K562 (cell line): ENCODE measurements at regions of chr1 and their contacts with region 1.

Region 1: DNA sequence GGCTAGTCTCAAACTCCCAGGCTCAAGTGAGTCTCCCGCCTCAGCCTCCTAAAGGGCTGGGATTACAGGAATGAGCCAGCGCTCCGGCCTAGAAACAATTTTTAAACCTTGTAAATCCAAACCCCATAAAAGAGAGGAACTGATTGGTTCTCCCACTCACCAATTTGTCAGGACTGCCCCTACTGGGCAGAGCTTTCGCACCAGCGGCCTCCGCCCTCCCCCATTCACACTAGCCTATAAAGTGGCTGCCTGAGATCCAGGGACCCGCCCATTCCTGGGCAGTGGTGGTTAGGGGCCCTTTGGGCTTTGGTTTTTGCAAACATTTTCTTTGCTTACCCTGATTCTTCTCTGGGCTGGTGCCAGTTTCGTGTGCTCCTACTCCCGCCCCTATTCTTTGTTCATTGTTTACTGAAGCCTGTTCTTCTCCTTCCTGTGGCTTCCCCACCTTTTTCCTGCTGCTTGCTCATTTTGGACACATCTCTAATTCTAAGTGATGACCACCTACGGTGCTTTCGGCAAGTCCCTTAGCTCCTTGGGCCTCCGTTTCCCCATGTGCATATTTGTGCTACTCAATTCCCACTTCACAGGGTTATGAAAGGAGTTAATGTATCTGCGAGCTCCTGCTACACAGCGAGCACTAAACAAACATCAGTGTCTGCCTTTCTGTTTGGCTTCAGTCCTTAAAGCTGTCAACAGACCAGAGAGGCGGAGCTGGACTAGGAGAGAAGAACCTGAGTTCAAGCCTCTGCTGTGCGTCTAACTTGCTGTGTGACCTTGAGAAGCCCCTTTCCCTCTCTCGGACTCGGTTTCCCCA is 39.8 kb upstream of the CLIC4 start:
- DNase-seq: peak; percentile 92 to 99 (median 94)
- ATAC-seq: peak; percentile 100
- H3K4me3 ChIP-seq: peak overlapping the region; percentile 4; the same call in 1 of the 2 replicates
- H3K27ac ChIP-seq: peak overlapping the region; percentile 43; the same call in 2 of the 3 replicates
- H3K4me1 ChIP-seq: peaks cover 15 to 26% of the 10 kb centered on the region in 2 experiments
- H3K27me3 ChIP-seq: no peaks in the 10 kb centered on the region
- CTCF ChIP-seq: no peak
- EP300 ChIP-seq: no peak
- POLR2A ChIP-seq: peak; percentile 66; the same call in 1 of the 2 replicates
- RAD21 ChIP-seq: no peak

Region 2: DNA sequence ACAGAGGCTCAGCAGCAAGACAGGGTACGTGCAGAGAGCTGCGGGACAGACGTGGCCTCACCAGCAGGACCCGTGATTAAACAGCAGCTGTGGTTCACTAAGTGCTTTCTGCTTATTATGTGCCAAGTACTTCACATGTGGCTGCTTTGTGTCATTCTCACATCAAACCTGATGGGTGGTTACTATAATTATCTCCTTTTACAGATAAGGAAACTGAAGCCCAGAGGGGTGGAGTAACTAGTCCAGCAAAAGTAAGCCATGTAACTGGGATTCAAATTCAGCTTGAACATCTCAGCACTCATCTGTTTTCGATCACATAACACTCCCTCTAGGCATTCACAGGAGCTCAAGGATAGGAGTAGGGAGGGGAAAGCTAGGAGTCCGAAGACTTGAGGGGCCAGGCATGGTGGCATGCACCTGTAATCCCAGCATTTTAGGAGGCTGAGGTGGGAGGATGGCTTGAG is 11.1 kb before region 1 on chr1:
- CTCF ChIA-PET with region 1: no interaction called
- POLR2A ChIA-PET with region 1: interaction called, 14 read pairs
- in situ Hi-C with region 1: no loop called
- intact Hi-C with region 1: no loop called
- DNase-seq: peak in 2 of 4 experiments; percentile 35 to 55
- ATAC-seq: peak; percentile 56
- H3K4me3 ChIP-seq: no peak overlapping the region
- H3K27ac ChIP-seq: peak overlapping the region; percentile 25; the same call in 1 of the 3 replicates
- H3K4me1 ChIP-seq: peaks cover 13 to 26% of the 10 kb centered on the region in 2 experiments
- H3K27me3 ChIP-seq: no peaks in the 10 kb centered on the region
- CTCF ChIP-seq: no peak
- EP300 ChIP-seq: no peak
- POLR2A ChIP-seq: no peak
- RAD21 ChIP-seq: 0 out of 4 replicates have a peak, but pooled peaks of 1 of the 2 experiments have one; percentile 20

Region 3: DNA sequence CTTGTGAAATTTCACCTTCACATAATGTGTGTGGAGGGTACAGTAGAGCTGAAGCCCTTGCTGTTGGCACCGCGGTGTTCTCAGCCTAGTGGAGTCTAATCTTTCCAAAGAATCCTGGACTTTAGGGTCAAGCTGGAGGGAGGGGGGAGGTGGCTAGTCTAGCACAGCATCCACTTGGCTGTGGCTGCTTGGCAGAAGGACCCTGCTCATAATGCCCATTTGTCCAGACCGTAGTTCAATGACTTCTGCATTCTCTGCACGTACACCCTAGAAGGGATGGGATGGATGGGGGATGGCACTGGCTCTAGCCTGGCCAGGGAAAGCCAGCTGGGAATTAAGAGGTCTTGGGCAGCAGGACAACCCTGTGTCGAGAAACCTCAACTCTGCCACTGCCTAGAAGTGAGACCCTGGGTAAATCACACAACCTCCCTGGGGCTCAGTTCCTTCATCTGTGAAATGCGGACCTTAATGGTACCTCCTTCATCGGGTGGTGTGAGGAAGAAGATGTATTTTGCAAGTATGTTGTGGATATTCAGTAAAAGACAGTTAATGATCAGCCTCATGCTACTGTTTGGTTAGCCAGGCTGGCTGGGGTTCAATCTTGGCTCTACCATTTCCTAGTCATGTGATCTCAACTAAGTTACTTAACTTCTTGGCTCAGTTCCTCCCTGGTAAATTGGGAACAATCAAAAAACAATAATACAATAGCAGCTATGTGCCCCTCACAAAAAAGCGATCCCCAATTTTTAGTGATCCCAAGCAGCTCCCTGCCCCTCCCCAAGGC is 12.6 kb after region 1 on chr1:
- CTCF ChIA-PET with region 1: no interaction called
- POLR2A ChIA-PET with region 1: interaction called, 11 read pairs
- in situ Hi-C with region 1: no loop called
- intact Hi-C with region 1: no loop called
- DNase-seq: peak in 2 of 4 experiments; percentile 3 to 4
- ATAC-seq: no peak
- H3K4me3 ChIP-seq: no peak overlapping the region
- H3K27ac ChIP-seq: no peak overlapping the region
- H3K4me1 ChIP-seq: peaks cover 0 to 6% of the 10 kb centered on the region in 2 experiments; a peak in 1 of 5 replicates
- H3K27me3 ChIP-seq: no peaks in the 10 kb centered on the region
- CTCF ChIP-seq: no peak
- EP300 ChIP-seq: no peak
- POLR2A ChIP-seq: no peak
- RAD21 ChIP-seq: no peak

Region 4: GRCh38 chr1:24805534-24806301 is 100.3 kb after region 1 on chr1:
- CTCF ChIA-PET with region 1: no interaction called
- POLR2A ChIA-PET with region 1: no interaction called
- in situ Hi-C with region 1: no loop called
- intact Hi-C with region 1: no loop called
- DNase-seq: no peak
- ATAC-seq: no peak
- H3K4me3 ChIP-seq: no peak overlapping the region
- H3K27ac ChIP-seq: no peak overlapping the region
- H3K4me1 ChIP-seq: peaks cover 0 to 11% of the 10 kb centered on the region in 2 experiments; a peak in 2 of 5 replicates
- H3K27me3 ChIP-seq: no peaks in the 10 kb centered on the region
- CTCF ChIP-seq: no peak
- EP300 ChIP-seq: no peak
- POLR2A ChIP-seq: no peak
- RAD21 ChIP-seq: no peak